ENCODE measurements at regions of chr2 and their contacts with region 1.

Region 1: DNA sequence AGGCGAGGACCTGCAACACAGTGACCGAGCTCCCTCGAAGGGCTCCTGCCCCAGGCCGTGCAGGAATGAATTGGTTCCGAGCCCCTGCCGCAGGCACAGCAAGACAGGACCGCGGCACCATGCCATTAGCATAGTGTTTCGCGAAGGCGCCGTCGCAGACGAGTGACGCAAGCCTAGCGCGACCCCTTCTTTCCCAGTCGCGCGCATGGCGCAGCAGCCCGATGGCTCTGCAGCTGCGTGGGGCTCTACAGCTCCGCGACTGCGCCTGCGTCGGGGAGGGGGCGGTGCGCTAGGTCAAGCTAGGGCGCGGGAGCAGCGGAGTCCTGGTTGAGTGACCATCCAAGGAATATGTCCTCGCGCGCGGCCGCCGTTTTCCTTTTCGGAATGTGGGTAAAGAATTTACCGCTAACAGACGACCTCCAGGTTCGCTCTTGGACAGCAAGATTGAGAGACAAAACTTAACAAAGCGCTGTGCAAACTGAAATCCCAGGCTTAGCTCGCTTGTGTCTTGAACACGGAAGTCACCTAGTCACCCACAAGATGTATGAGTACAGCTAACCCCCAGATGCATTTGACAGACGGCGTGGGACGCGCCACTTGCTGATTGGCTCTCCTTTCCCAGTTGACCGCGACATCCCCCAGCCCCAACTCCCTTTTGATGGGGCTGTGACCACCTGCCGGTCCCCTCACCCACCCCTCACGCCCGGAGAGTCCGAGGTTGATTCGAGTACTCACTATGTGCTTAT is at the start of gene TRMT61B:
- DNase-seq: peak; percentile 97
- H3K4me3 Mint-ChIP-seq: peak within 1 kb of the TSS; percentile 97
- H3K27ac Mint-ChIP-seq: peak within 1 kb of the TSS; percentile 93
- H3K4me1 Mint-ChIP-seq: peaks cover 23% of the 10 kb centered on the region
- H3K27me3 Mint-ChIP-seq: peaks cover 6% of the 10 kb centered on the region
- total RNA-seq, gene TRMT61B: 18.4 and 21.4 TPM in 2 replicates

Region 2: DNA sequence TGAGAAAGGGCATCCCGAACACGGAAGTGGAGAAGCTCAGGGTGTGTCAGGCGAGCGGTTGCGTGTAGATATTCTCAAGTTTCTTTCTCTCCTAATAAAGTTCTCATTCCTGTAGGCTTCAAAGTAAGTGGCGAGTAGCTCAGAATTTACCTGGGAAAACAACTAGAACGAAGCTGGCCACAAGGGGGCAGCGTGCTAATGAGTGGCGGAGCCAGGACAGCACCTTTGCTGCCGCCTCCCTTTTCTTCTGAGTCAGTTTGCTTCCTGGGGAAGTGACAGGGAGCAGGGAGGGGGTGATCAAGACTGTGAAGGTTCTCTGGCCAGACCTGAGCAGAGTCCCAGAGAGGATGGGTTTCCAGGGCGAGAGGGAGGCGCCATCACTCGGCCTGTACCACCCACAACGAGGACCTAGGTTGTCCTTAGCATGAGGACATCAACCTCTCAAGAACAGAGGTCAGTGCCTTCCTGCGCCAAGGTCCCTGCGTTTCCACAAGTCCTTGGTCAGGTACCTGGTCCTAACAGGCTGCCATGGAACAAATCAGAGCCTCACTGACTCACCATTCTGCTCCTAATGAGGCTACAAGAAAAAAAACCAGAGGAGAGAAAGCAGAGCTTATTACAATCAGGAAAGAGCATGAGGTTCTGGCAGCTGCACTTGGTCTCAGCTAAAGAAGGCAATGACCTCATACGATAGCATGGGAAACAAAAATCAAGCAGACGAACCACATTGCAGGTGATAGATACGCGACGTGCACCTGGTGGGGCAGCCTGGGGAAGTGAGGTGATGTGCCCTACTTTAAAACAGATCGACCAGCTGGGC is 275.8 kb before region 1 on chr2:
- intact Hi-C with region 1: loop called (anchors 1 kb)
- DNase-seq: peak; percentile 71
- H3K4me3 Mint-ChIP-seq: peak overlapping the region; percentile 49
- H3K27ac Mint-ChIP-seq: peak overlapping the region; percentile 78
- H3K4me1 Mint-ChIP-seq: peaks cover 30% of the 10 kb centered on the region
- H3K27me3 Mint-ChIP-seq: peaks cover 4% of the 10 kb centered on the region

Region 3: GRCh38 chr2:28810384-28811285 is 59.7 kb before region 1 on chr2 and contains the start of gene SPDYA:
- intact Hi-C with region 1: loop called (anchors 1 kb)
- DNase-seq: peak; percentile 79
- H3K4me3 Mint-ChIP-seq: peak within 1 kb of the TSS; percentile 80
- H3K27ac Mint-ChIP-seq: peak within 1 kb of the TSS; percentile 40
- H3K4me1 Mint-ChIP-seq: peaks cover 12% of the 10 kb centered on the region
- H3K27me3 Mint-ChIP-seq: peaks cover 4% of the 10 kb centered on the region
- total RNA-seq, gene SPDYA: 1.1 and 1.7 TPM in 2 replicates

Region 4: DNA sequence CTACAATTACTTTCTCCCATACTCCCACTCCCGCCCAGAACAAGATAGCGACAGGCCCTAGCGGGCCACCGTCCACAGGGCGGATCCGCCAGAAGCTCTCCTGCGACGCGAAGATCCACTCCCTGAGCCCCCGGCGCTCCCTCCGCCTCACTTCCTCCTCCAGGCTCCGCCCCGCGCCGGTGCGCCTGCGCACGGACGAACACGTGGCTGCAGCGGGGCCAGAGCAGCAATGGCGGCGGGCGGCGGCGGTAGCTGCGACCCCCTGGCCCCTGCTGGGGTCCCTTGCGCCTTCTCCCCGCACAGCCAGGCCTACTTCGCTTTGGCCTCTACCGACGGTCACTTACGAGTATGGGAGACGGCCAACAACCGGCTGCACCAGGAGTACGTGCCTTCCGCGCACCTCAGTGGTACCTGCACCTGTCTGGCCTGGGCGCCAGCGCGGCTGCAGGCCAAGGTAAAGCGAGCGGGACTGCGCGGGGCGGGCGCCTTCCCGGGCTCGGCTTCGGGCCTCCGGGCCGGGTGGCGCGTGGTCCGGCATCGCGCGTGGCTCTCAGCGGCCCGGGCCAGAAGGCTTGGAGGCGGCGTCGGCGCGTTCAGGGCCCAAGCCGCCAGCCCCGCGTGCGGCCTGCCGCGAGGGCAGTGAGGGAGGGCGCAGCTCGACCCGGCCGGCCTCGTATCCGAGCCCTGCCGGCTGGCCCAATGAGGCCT is 24.3 kb after region 1 on chr2 and contains the start of gene WDR43:
- intact Hi-C with region 1: loop called (anchors 1 kb)
- DNase-seq: peak; percentile 99
- H3K4me3 Mint-ChIP-seq: peak within 1 kb of the TSS; percentile 100
- H3K27ac Mint-ChIP-seq: peak within 1 kb of the TSS; percentile 96
- H3K4me1 Mint-ChIP-seq: peaks cover 40% of the 10 kb centered on the region
- H3K27me3 Mint-ChIP-seq: no peaks in the 10 kb centered on the region
- total RNA-seq, gene WDR43: 188 and 190 TPM in 2 replicates

Region 5: DNA sequence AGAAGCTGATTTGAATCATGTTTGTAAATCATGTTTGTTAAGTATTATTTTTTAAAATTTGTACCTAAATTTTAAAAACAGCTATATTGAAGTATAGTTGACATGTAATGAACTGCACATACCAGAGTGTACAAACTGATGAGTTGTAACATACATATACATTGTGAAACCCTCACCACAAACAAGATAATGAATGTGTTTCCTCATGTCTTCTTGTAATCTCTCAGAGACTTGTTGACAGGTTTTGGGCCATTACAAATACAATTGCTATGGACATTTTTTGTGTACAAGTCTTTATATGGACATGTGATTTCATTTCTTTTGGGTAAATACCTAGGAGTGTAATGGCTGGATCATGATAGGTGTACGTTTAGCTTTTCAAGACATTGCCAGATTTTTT is 45.6 kb after region 1 on chr2:
- intact Hi-C with region 1: no loop called
- DNase-seq: no peak
- H3K4me3 Mint-ChIP-seq: no peak overlapping the region
- H3K27ac Mint-ChIP-seq: peak overlapping the region; percentile 44
- H3K4me1 Mint-ChIP-seq: peaks cover 9% of the 10 kb centered on the region
- H3K27me3 Mint-ChIP-seq: no peaks in the 10 kb centered on the region

Region 6: GRCh38 chr2:29108225-29108624 is 237.9 kb after region 1 on chr2:
- intact Hi-C with region 1: no loop called
- DNase-seq: no peak
- H3K4me3 Mint-ChIP-seq: no peak overlapping the region
- H3K27ac Mint-ChIP-seq: no peak overlapping the region
- H3K4me1 Mint-ChIP-seq: peaks cover 16% of the 10 kb centered on the region
- H3K27me3 Mint-ChIP-seq: peaks cover 9% of the 10 kb centered on the region

Measured in activated T-helper 1 cell treated with anti-CD3 and anti-CD28 coated beads, Interleukin-12 subunit alpha, Interleukin-12 subunit beta, Interleukin-2, Interleukin-4 antibody, amounts not matched to agents 30 ng/mL and 10 ng/mL and 1 ng/mL, durations not matched to agents 14 hours and 24 hours and 36 hours (primary cell).